ENCODE measurements at regions of chr10 and their contacts with region 1.

Region 1: GRCh38 chr10:37434091-37434490 is 308.7 kb downstream of the ANKRD30A start:
- DNase-seq: no peak
- H3K4me3 ChIP-seq: no peak overlapping the region
- H3K27ac ChIP-seq: no peak overlapping the region
- H3K4me1 ChIP-seq: no peaks in the 10 kb centered on the region
- H3K27me3 ChIP-seq: no peaks in the 10 kb centered on the region
- CTCF ChIP-seq: 0 out of 2 replicates have a peak, but pooled peaks have one; percentile 19

Region 2: DNA sequence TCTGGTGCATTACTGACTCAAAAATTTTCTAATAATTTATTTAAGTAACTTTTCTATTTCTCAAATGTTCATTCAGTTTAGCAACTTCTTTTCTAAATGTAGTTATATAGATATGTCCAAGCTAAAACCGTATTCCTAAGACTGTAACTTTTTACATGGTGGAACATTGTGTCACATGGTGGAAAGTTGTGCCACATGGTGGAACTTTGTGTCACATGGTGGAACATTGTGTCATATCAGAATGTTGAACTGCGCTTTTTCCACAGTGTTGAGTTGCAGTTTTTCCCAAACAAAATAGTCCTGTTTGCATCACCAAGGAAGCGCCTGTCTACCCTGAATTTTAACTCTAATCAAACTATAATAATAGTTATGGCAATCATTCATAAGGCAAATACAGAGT is 199.4 kb before region 1 on chr10:
- CTCF ChIA-PET with region 1: no interaction called
- POLR2A ChIA-PET with region 1: no interaction called
- intact Hi-C with region 1: no loop called
- DNase-seq: no peak
- H3K4me3 ChIP-seq: no peak overlapping the region
- H3K27ac ChIP-seq: no peak overlapping the region
- H3K4me1 ChIP-seq: no peaks in the 10 kb centered on the region
- H3K27me3 ChIP-seq: no peaks in the 10 kb centered on the region
- CTCF ChIP-seq: no peak

Region 3: DNA sequence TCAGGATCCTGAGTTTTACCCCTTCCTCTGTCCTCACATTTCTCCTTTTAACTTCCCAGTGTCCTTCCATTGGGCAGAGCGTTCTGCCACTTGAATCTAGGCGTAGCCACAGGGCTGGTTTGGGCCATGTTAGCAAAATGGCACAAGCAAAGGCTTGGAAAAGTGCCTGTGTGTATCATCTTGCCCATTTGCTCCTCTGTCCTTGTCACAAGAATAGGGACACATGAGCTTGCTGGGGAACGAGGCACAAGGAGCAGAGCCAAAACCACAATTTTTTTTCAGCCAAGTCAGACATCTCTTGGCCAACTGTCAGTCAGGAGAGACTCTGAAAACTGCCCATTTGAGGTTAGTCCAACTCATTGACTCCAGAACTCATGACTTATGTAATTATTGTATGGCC is 138.1 kb after region 1 on chr10:
- CTCF ChIA-PET with region 1: interaction called, 16 read pairs
- POLR2A ChIA-PET with region 1: no interaction called
- intact Hi-C with region 1: no loop called
- DNase-seq: no peak
- H3K4me3 ChIP-seq: no peak overlapping the region
- H3K27ac ChIP-seq: no peak overlapping the region
- H3K4me1 ChIP-seq: no peaks in the 10 kb centered on the region
- H3K27me3 ChIP-seq: no peaks in the 10 kb centered on the region
- CTCF ChIP-seq: no peak

Region 4: DNA sequence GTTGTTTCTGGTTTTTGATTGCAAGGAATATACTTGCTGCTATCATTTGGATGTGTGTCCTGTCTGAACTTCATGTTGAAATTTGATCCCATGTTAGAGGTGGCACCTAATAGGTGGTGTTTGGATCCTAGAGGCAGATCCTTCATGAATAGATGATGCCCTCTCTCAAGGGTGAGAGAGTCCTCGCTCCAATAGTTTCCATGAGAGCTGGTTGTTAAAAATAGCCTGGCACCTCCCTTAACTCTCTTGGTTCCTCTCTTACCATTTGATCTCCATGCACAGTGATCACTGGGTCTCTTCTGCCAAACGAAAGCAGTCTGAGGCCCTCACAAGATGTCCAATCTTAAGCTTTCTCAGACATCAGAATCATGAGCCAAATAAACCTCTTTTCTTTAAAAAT is 472.3 kb after region 1 on chr10:
- CTCF ChIA-PET with region 1: no interaction called
- POLR2A ChIA-PET with region 1: no interaction called
- intact Hi-C with region 1: no loop called
- DNase-seq: no peak
- H3K4me3 ChIP-seq: no peak overlapping the region
- H3K27ac ChIP-seq: no peak overlapping the region
- H3K4me1 ChIP-seq: no peaks in the 10 kb centered on the region
- H3K27me3 ChIP-seq: no peaks in the 10 kb centered on the region
- CTCF ChIP-seq: no peak

Measured in A673 (cell line).